SK-MEL-5 (cell line): ENCODE measurements at regions of chr16 and their contacts with region 1.

Region 1: DNA sequence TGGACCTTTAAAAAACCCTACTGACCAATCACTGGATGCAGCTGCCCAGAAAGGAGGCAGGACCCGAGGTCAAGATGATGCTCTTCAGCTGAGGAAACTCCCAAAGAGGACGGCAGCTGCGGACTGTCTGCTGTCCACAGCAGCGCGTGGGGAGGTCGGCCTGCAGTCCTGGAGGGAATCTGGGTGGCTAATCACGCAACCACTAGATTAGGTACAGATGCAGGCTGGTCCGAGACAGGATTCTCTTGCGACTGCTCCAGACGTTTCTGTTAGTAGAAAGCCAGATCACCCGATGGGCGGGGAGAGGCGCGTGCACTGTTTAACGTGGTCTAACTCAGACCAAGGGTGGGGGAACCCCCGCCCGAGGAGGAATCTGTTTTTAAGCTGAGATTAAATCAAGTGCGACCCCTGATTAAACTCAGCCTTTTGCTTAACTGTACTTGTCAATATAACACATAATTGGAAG is 8.8 kb downstream of the CTRB2 start:
- DNase-seq: no peak

Region 2: GRCh38 chr16:75087375-75087979 is 110.7 kb before region 1 on chr16:
- in situ Hi-C with region 1: no loop called
- DNase-seq: no peak

Region 3: DNA sequence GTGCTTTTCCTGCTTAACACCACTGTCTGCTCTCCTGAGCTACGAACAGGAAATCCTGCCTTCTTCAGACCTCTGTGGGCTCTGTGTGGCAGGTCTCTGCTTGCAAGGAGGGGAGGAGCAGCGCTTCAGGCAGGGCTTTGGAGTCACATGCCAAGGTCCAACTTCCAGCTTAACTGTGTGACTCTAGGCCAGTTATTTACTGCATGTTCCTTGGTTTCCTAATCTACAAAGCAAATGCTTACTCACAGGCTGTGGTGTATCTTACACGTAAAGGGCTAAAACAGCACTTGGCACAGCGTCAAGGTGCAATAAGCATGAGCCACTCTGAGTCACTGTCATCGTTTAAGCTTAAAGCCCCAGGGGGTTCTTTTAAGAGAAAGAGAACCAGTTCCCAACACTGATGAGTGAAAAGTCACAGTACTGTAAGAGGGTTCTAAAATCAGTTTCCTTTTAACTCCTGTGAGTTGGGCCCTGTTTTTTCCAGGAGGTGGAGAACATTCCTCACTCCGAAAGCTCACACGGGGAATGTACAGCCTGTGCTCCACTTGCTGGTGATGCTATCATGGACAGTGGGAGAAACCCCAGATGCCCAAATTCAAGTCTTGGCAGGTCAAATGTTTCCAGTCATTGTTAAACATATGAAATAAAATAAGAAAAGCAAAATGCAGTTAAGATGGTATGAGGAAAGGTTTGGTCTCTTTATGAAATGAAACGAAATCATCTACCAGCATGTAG is 107.4 kb after region 1 on chr16:
- in situ Hi-C with region 1: loop called (anchors 25 kb)
- DNase-seq: peak; percentile 88